Activated CD4-positive, alpha-beta T cell treated with anti-CD3 and anti-CD28 coated beads for 36 hours (primary cell): ENCODE measurements at regions of chr7 and their contacts with region 1.

Region 1: GRCh38 chr7:75842836-75843446 is 29.3 kb upstream of the CCL24 start:
- DNase-seq: peak; percentile 74
- ATAC-seq: peak; percentile 95
- H3K4me3 Mint-ChIP-seq: peak overlapping the region; percentile 32
- H3K27ac Mint-ChIP-seq: peak overlapping the region; percentile 87
- H3K4me1 Mint-ChIP-seq: peaks cover 14% of the 10 kb centered on the region
- H3K27me3 Mint-ChIP-seq: no peaks in the 10 kb centered on the region

Region 2: DNA sequence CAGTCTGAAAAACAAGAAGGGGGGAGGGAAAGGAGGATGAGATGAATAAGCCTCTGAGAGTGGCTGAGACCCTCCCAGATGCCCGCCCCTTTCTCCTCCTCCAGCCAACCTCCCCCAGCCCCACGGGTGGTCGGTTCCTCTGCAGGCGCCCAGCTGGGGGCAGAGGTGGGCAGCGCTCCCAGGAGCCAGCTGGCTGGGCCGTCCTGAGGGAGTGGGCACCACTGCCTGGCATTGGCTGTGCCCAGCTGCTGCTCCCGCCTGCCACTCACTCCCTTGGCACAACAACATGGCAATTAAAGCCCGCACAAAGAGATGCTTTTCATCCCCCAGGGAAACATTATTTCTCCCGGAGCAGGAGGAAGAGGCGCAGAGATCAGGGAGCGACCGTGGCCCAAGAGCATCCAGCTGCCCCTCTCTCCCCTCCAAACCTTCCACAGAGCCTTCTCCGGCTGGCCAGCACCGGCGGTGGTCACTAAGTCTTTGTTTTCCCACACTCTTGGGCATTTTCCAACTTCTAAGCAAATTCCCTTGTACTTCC is 243.6 kb before region 1 on chr7:
- CTCF ChIA-PET with region 1: no interaction called
- POLR2A ChIA-PET with region 1: no interaction called
- intact Hi-C with region 1: loop called in 1 of 2 experiments (anchors 2 kb)
- DNase-seq: no peak
- ATAC-seq: no peak
- H3K4me3 Mint-ChIP-seq: no peak overlapping the region
- H3K27ac Mint-ChIP-seq: no peak overlapping the region
- H3K4me1 Mint-ChIP-seq: peaks cover 21% of the 10 kb centered on the region
- H3K27me3 Mint-ChIP-seq: no peaks in the 10 kb centered on the region

Region 3: GRCh38 chr7:75878769-75879611 is 36.0 kb after region 1 on chr7 and contains the start of gene RHBDD2:
- CTCF ChIA-PET with region 1: no interaction called
- POLR2A ChIA-PET with region 1: interaction called, 3 read pairs
- intact Hi-C with region 1: loop called in 1 of 2 experiments (anchors 1 kb)
- DNase-seq: peak; percentile 99
- ATAC-seq: peak; percentile 97
- H3K4me3 Mint-ChIP-seq: peak within 1 kb of the TSS; percentile 100
- H3K27ac Mint-ChIP-seq: peak within 1 kb of the TSS; percentile 97
- H3K4me1 Mint-ChIP-seq: peaks cover 34% of the 10 kb centered on the region
- H3K27me3 Mint-ChIP-seq: no peaks in the 10 kb centered on the region
- total RNA-seq, gene RHBDD2: 21.6 to 23.2 TPM